Esophagus squamous epithelium (tissue), 5 donors: ENCODE measurements at regions of chr7 and their contacts with region 1.

Region 1: DNA sequence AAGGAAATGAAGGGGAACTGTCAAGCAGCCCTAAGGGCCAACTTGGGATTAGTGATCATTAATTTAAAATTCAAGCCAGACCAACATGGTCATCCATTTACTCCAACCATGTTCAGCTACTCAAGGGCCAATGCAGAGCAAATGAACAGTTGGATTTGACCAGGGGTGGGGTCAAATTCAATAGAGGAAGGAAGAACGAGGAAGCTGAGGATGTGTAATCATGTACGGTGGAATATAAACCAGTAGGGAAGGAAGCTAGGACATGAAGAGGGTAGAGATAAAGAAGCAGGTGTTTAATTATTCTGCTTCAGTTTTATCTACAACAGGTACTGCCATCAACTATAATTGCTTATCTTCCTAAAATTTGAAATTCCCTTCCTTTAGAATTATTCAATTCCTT is 81.6 kb downstream of the HIBADH start:
- DNase-seq: no peak
- H3K4me3 ChIP-seq: no peak overlapping the region
- H3K27ac ChIP-seq: no peak overlapping the region
- H3K4me1 ChIP-seq: no peaks in the 10 kb centered on the region
- H3K27me3 ChIP-seq: no peaks in the 10 kb centered on the region
- CTCF ChIP-seq: no peak
- POLR2A ChIP-seq: no peak

Region 2: DNA sequence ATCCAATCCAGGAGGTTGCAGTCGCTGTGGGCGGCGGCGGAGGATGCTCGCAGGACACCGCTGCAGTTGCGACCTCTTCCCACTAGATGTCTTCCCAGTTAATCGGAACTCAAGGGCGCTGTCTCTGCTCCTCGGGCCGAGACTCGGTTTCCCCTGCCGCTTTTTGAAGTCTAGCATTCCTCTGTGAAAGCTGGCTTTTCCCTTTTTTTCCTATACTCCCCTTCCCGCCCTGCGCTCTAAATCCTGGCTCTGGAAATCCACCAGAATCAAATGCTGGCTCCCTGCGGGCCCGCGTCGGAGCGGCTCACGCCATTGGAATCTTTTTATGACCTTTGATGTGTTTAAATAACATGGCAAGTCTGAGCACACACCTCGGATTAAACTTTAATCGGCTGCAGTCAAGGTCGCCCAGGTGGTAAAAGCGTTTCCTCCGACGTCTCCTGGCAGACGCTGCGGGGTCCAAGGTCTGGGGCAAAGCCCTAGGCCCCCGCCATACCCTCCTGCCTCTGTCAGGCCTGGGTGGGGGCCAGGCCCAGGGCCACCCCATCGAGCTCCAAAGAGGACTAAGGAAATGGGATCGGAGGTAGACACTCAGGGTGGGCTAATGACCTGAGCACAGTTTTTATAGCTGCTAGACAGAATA is 370.6 kb before region 1 on chr7:
- intact Hi-C with region 1: loop called (anchors 5 kb)
- DNase-seq: no peak
- H3K4me3 ChIP-seq: peak overlapping the region in 3 of 4 donors; percentile 9 to 53 (median 29)
- H3K27ac ChIP-seq: no peak overlapping the region
- H3K4me1 ChIP-seq: peaks cover 7 to 19% (median 11%) of the 10 kb centered on the region in 3 donors
- H3K27me3 ChIP-seq: peaks cover 19 to 100% (median 61%) of the 10 kb centered on the region in 4 donors
- CTCF ChIP-seq: peak; percentile 28 to 79 (median 57)
- POLR2A ChIP-seq: no peak